ENCODE measurements at regions of chr15 and their contacts with region 1.

Region 1: DNA sequence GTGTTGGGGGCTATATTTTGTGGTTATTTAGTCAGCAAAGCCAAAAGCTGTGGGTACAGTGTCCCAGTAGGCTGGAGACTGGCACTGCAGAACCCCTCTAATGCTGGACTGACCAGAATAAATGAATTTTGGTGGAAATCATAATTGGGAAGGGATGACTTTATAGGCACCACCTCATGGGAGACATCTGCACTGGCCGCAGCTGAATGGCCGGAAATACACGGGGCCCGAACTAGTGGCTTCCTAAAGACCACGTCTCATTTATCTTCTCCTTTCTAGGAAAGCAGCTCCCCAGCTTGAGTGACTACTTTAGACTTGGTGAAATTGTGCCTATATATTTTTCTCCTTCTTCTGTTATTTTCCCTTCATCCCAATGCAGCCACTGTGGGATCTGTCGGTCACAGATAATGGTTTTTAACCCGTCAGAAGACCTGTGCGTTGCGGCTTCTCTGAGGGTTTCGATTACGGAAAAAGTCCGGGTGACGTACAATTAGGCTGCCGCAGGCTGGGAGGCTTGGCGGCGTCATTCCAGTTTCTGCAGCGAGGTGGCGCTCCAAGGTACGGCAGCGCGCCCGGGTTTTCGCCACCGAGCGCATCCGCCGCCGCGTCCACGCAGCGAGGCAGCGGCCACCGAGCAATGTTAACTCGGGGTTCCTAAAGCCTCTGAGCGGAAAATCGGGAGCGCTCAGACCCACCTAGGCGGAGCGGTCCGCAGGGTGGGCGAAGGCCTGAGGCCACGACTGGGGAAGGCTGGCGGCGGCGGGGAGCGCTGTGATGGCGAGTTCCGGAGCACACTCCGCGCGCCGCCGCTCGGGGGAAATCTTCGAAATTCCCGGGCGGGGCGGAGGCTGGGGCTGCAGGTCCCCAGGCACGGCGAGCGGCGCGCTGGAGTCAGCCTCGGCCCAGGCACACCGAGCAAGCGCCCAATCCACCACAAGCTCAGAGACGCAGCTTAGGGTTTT is 26.3 kb downstream of the NR2F2 start:
- DNase-seq: peak; percentile 83 to 93 (median 84)
- ATAC-seq: peak; percentile 93
- H3K4me3 ChIP-seq: peak overlapping the region; percentile 68
- H3K27ac ChIP-seq: peak overlapping the region; percentile 73
- H3K4me1 ChIP-seq: peaks cover 15 to 43% of the 10 kb centered on the region in 2 experiments
- H3K27me3 ChIP-seq: no peaks in the 10 kb centered on the region
- CTCF ChIP-seq: peak; percentile 91 to 97 (median 93)
- EP300 ChIP-seq: no peak; the same call in 1 of the 2 replicates
- POLR2A ChIP-seq: peak; percentile 78
- RAD21 ChIP-seq: peak; percentile 78 to 79

Region 2: GRCh38 chr15:96462777-96463750 is 106.3 kb after region 1 on chr15:
- CTCF ChIA-PET with region 1: no interaction called
- POLR2A ChIA-PET with region 1: interaction called, 3 read pairs
- in situ Hi-C with region 1: no loop called
- intact Hi-C with region 1: loop called (anchors 5 kb)
- DNase-seq: no peak
- ATAC-seq: peak; percentile 48; the same call in 2 of the 3 replicates
- H3K4me3 ChIP-seq: no peak overlapping the region
- H3K27ac ChIP-seq: no peak overlapping the region
- H3K4me1 ChIP-seq: no peaks in the 10 kb centered on the region
- H3K27me3 ChIP-seq: peaks cover 17 to 21% of the 10 kb centered on the region in 2 experiments; a peak in 4 of 5 replicates
- CTCF ChIP-seq: peak in 2 of 3 experiments; percentile 73 to 83; a peak in 4 of 6 replicates
- EP300 ChIP-seq: no peak
- POLR2A ChIP-seq: no peak
- RAD21 ChIP-seq: peak in 1 of 2 experiments; percentile 46; a peak in 2 of 4 replicates

Region 3: GRCh38 chr15:96585484-96586386 is 229.0 kb after region 1 on chr15:
- CTCF ChIA-PET with region 1: no interaction called
- POLR2A ChIA-PET with region 1: no interaction called
- in situ Hi-C with region 1: loop called (anchors 10 kb)
- intact Hi-C with region 1: loop called (anchors 1 kb)
- DNase-seq: peak in 2 of 4 experiments; percentile 17 to 21
- ATAC-seq: peak; percentile 60; the same call in 1 of the 3 replicates
- H3K4me3 ChIP-seq: no peak overlapping the region
- H3K27ac ChIP-seq: no peak overlapping the region
- H3K4me1 ChIP-seq: no peaks in the 10 kb centered on the region; a peak in 1 of 5 replicates
- H3K27me3 ChIP-seq: peaks cover 13 to 18% of the 10 kb centered on the region in 2 experiments
- CTCF ChIP-seq: peak; percentile 25 to 49 (median 40); a peak in 5 of 6 replicates
- EP300 ChIP-seq: no peak
- POLR2A ChIP-seq: no peak
- RAD21 ChIP-seq: peak; percentile 22 to 36; a peak in 3 of 4 replicates

Region 4: GRCh38 chr15:96893159-96893906 is 536.6 kb after region 1 on chr15:
- CTCF ChIA-PET with region 1: no interaction called
- POLR2A ChIA-PET with region 1: no interaction called
- in situ Hi-C with region 1: no loop called
- intact Hi-C with region 1: loop called (anchors 2 kb)
- DNase-seq: no peak
- ATAC-seq: no peak
- H3K4me3 ChIP-seq: no peak overlapping the region
- H3K27ac ChIP-seq: no peak overlapping the region
- H3K4me1 ChIP-seq: no peaks in the 10 kb centered on the region
- H3K27me3 ChIP-seq: no peaks in the 10 kb centered on the region
- CTCF ChIP-seq: no peak; a peak in 1 of 6 replicates
- EP300 ChIP-seq: no peak
- POLR2A ChIP-seq: no peak
- RAD21 ChIP-seq: peak; percentile 16 to 34; a peak in 2 of 4 replicates